PC-3 (cell line): ENCODE measurements at regions of chr1 and their contacts with region 1.

Region 1: GRCh38 chr1:162391790-162392563 is 10.4 kb downstream of the C1orf226 start:
- DNase-seq: peak; percentile 71
- ATAC-seq: peak; percentile 57
- H3K4me3 ChIP-seq: no peak overlapping the region
- H3K27ac ChIP-seq: no peak overlapping the region
- H3K4me1 ChIP-seq: peaks cover 11% of the 10 kb centered on the region
- H3K27me3 ChIP-seq: no peaks in the 10 kb centered on the region
- CTCF ChIP-seq: peak; percentile 91

Region 2: DNA sequence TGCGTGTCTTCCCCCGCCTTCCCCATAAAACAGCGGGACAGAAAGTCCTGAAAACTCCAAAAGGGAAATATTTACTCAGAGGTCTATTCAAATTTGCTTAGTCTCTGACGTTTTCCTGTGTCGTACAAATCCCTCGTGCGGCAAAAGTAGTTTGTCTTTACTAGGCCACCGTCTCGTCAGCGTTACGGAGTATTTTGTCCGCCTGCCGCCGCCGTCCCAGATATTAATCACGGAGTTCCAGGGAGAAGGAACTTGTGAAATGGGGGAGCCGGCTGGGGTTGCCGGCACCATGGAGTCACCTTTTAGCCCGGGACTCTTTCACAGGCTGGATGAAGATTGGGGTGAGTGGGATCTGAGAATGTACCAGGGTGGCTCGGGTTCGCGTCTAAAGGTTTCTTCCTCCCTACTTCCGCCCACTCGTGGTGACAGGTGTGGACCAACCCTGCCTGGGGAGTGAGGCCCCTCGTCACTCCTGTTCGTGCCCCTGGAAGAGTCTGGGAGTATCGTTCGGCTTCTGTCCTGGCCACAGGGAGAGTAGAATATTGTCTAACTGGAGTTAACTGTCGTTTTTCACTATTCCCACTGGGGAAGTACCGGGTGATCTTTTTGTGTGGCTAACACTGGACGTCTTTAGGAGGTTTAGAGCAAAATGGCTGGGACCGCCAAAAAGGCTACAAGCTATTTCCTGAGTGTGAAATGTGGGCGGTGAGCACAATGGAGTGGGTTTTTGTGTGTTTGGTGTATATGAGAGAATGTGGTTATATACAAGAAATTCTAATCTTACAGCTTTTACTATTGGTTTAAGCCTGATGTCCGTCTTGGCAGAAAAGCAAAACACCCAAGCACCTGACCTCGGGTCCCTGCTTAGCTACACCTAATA is 625.6 kb before region 1 on chr1 and contains the start of gene ATF6:
- CTCF ChIA-PET with region 1: no interaction called
- POLR2A ChIA-PET with region 1: no interaction called
- intact Hi-C with region 1: loop called (anchors 10 kb)
- DNase-seq: peak; percentile 96
- ATAC-seq: peak; percentile 66
- H3K4me3 ChIP-seq: peak within 1 kb of the TSS; percentile 88
- H3K27ac ChIP-seq: peak within 1 kb of the TSS; percentile 67
- H3K4me1 ChIP-seq: peaks cover 26% of the 10 kb centered on the region
- H3K27me3 ChIP-seq: no peaks in the 10 kb centered on the region
- CTCF ChIP-seq: no peak
- total RNA-seq, gene ATF6: 19.2 and 19.7 TPM in 2 replicates

Region 3: GRCh38 chr1:162256287-162256686 is 135.7 kb before region 1 on chr1:
- CTCF ChIA-PET with region 1: no interaction called
- POLR2A ChIA-PET with region 1: no interaction called
- intact Hi-C with region 1: no loop called
- DNase-seq: no peak
- ATAC-seq: no peak
- H3K4me3 ChIP-seq: no peak overlapping the region
- H3K27ac ChIP-seq: no peak overlapping the region
- H3K4me1 ChIP-seq: no peaks in the 10 kb centered on the region
- H3K27me3 ChIP-seq: no peaks in the 10 kb centered on the region
- CTCF ChIP-seq: no peak

Region 4: DNA sequence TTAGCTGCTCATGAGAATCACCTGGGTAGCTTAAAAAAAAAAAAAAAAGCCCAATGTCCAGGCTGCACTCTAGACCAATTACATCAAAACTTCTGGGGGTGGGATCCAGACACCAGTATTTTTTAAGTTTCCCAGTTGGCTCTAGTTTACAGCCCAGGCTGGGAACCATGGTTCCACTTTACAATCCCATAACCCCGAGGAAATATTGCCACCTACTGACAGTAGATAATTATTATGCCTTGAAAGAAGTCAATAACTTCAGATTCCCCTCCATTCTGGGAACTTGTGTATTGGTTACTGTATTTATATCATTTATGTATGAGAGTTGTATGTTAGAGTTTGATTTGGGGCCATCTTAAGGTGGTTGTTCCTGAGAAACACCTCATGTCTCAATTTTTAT is 115.5 kb before region 1 on chr1:
- CTCF ChIA-PET with region 1: no interaction called
- POLR2A ChIA-PET with region 1: no interaction called
- intact Hi-C with region 1: loop called (anchors 1 kb)
- DNase-seq: peak; percentile 84
- ATAC-seq: peak; percentile 68
- H3K4me3 ChIP-seq: no peak overlapping the region
- H3K27ac ChIP-seq: no peak overlapping the region
- H3K4me1 ChIP-seq: no peaks in the 10 kb centered on the region
- H3K27me3 ChIP-seq: no peaks in the 10 kb centered on the region
- CTCF ChIP-seq: peak; percentile 91

Region 5: GRCh38 chr1:162357681-162358266 is 34.2 kb before region 1 on chr1:
- CTCF ChIA-PET with region 1: interaction called, 14 read pairs
- POLR2A ChIA-PET with region 1: no interaction called
- intact Hi-C with region 1: loop called (anchors 1 kb)
- DNase-seq: peak; percentile 75
- ATAC-seq: peak; percentile 70
- H3K4me3 ChIP-seq: no peak overlapping the region
- H3K27ac ChIP-seq: no peak overlapping the region
- H3K4me1 ChIP-seq: no peaks in the 10 kb centered on the region
- H3K27me3 ChIP-seq: no peaks in the 10 kb centered on the region
- CTCF ChIP-seq: peak; percentile 92

Region 6: DNA sequence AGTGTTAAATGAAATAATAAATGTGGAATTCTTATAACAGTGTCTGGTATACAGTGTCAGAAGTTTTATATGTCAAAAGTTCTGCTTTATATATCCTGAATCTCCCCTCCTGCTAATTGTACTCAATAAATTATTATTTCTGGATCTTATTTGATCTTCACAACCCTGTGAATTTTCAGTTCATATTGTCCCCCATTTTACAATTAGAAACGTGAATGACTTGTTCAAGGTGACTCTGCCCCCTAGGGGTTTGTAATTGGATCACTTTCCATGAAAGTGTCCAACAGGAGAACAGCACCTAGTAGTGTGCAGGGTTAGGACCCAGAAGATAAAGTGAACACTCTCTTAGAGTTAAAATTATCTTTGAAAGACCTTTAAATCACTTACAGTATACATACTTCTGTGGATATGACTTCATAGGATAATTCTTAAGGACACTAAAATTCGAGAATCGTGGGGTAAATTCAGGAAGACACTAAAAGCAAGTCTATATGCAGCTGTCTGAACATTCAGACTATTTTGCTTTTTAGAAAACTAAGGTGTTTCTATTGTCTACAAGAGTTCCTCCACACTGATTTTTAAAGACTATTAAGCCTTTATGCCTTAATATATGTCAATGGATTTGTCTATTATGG is 235.8 kb after region 1 on chr1:
- CTCF ChIA-PET with region 1: no interaction called
- POLR2A ChIA-PET with region 1: no interaction called
- intact Hi-C with region 1: loop called (anchors 10 kb)
- DNase-seq: peak; percentile 70
- ATAC-seq: peak; percentile 75
- H3K4me3 ChIP-seq: no peak overlapping the region
- H3K27ac ChIP-seq: no peak overlapping the region
- H3K4me1 ChIP-seq: no peaks in the 10 kb centered on the region
- H3K27me3 ChIP-seq: no peaks in the 10 kb centered on the region
- CTCF ChIP-seq: peak; percentile 92